ENCODE measurements at regions of chr7 and their contacts with region 1.

Region 1: DNA sequence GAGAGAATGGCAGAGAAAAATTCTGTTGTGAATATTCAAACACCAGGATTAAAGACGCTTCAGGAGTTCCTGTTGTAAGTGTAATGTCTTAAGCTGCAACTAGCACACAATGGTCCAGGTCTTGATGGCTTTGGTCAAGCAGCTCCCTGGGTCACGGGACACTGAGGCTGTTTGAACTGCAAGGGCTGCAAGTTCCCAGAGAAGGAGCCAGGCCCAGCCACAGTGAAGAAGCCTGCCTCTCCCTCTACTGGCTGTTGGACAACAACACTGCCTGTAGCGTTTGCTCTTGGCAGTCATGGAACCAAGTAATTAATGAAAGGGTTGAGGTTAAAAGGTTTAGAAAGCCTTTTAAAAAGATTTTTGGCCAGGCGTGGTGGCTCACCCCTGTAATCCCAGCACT is 31.9 kb upstream of the GUSB start:
- DNase-seq: peak; percentile 35
- ATAC-seq: peak; percentile 80
- H3K4me3 ChIP-seq: no peak overlapping the region
- H3K27ac ChIP-seq: no peak overlapping the region
- H3K4me1 ChIP-seq: peaks cover 14% of the 10 kb centered on the region
- H3K27me3 ChIP-seq: no peaks in the 10 kb centered on the region
- CTCF ChIP-seq: peak; percentile 49

Region 2: GRCh38 chr7:65731562-65732035 is 282.3 kb before region 1 on chr7:
- CTCF ChIA-PET with region 1: no interaction called
- POLR2A ChIA-PET with region 1: no interaction called
- intact Hi-C with region 1: loop called (anchors 10 kb)
- DNase-seq: no peak
- ATAC-seq: peak; percentile 88
- H3K4me3 ChIP-seq: no peak overlapping the region
- H3K27ac ChIP-seq: no peak overlapping the region
- H3K4me1 ChIP-seq: no peaks in the 10 kb centered on the region
- H3K27me3 ChIP-seq: no peaks in the 10 kb centered on the region
- CTCF ChIP-seq: no peak

Region 3: GRCh38 chr7:66050990-66051424 is 37.1 kb after region 1 on chr7:
- CTCF ChIA-PET with region 1: no interaction called
- POLR2A ChIA-PET with region 1: no interaction called
- intact Hi-C with region 1: no loop called
- DNase-seq: peak; percentile 75
- ATAC-seq: peak; percentile 29
- H3K4me3 ChIP-seq: no peak overlapping the region
- H3K27ac ChIP-seq: no peak overlapping the region
- H3K4me1 ChIP-seq: peaks cover 23% of the 10 kb centered on the region
- H3K27me3 ChIP-seq: no peaks in the 10 kb centered on the region
- CTCF ChIP-seq: no peak

Region 4: GRCh38 chr7:66460921-66461361 is 447.0 kb after region 1 on chr7:
- CTCF ChIA-PET with region 1: no interaction called
- POLR2A ChIA-PET with region 1: no interaction called
- intact Hi-C with region 1: no loop called
- DNase-seq: peak; percentile 19
- ATAC-seq: no peak
- H3K4me3 ChIP-seq: no peak overlapping the region
- H3K27ac ChIP-seq: no peak overlapping the region
- H3K4me1 ChIP-seq: no peaks in the 10 kb centered on the region
- H3K27me3 ChIP-seq: no peaks in the 10 kb centered on the region
- CTCF ChIP-seq: no peak

Measured in PC-3 (cell line).